Sigmoid colon (tissue), 7 donors: ENCODE measurements at regions of chr13 and their contacts with region 1.

Region 1: GRCh38 chr13:26498656-26499591 is 58.6 kb upstream of the WASF3 start:
- DNase-seq: peak; percentile 47
- H3K4me3 ChIP-seq: no peak overlapping the region
- H3K27ac ChIP-seq: no peak overlapping the region
- H3K4me1 ChIP-seq: peaks cover 0 to 27% (median 19%) of the 10 kb centered on the region in 4 donors
- H3K27me3 ChIP-seq: no peaks in the 10 kb centered on the region
- CTCF ChIP-seq: no peak
- EP300 ChIP-seq: no peak
- POLR2A ChIP-seq: no peak

Region 2: DNA sequence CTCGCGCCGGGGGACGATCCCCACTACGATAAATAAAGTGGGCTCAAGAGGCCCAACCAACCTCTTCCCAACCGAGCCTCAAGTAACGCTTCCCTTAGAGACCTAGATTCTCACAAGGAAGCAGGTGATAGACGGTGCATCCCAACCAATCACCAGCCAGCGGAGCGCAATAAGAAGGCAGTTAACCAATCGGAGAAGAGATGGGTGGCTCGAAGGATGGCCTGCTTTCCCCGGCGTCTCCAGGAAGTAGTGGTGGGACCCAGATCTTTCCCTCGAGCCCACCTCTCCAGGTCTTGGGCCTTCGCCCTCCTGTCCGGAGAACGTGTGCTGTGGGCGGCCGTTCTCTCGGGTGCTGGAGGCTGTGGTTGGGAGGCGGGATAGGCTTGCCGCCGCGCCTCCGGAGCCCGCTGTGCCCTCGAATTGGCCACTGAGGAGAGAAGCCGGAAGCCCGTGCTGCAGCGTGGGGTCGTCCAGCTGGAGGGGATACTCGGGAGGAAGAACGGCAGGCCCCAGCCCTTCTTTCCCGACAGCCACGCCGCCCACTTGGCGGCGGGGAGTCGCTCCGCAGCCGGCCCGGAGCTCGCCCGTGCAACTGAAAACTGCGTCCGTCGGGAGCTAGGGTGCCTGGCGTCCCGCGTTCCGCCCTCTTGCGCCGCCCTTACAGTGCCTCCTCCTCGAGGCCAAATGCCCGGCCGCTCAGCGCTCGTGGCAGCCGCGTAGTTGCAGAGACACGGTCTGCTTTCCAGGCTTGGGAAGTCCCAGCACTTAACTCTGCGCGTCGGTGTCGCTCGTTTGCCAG is 277.0 kb before region 1 on chr13 and contains the start of gene RNF6:
- intact Hi-C with region 1: loop called (anchors 2 kb)
- DNase-seq: peak; percentile 98
- H3K4me3 ChIP-seq: peak within 1 kb of the TSS; percentile 79 to 96 (median 92)
- H3K27ac ChIP-seq: peak within 1 kb of the TSS; percentile 95 to 98 (median 96)
- H3K4me1 ChIP-seq: peaks cover 0 to 26% (median 21%) of the 10 kb centered on the region in 4 donors
- H3K27me3 ChIP-seq: no peaks in the 10 kb centered on the region
- CTCF ChIP-seq: peak in 1 of 4 experiments; percentile 35
- EP300 ChIP-seq: no peak
- POLR2A ChIP-seq: peak in 1 of 2 donors; percentile 29
- total RNA-seq, gene RNF6: 11.9 to 27.1 (median 22.5) TPM

Region 3: DNA sequence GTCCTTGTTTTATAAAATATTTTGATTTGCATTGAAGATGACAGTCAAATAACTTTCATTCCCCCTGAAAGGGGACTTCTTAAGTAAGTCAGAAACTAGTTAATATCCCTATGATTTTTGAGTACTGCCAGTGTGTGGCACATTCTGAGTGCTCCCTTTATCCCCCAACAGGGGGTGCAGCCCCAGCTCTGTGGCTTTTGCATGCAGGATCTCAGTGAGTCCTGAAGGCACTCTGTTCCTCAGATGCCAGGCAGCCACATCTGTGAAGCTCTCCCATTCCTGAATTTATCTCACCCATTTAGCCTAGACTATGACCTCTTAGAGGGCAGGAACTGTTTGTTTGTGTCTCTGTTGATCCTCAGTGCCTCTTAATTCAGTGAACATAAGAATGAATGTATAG is 121.9 kb before region 1 on chr13:
- intact Hi-C with region 1: loop called (anchors 5 kb)
- DNase-seq: no peak
- H3K4me3 ChIP-seq: no peak overlapping the region
- H3K27ac ChIP-seq: no peak overlapping the region
- H3K4me1 ChIP-seq: peaks cover 0 to 23% (median 5%) of the 10 kb centered on the region in 4 donors
- H3K27me3 ChIP-seq: no peaks in the 10 kb centered on the region
- CTCF ChIP-seq: peak in 2 of 4 experiments; percentile 37 to 43
- EP300 ChIP-seq: no peak
- POLR2A ChIP-seq: no peak

Region 4: DNA sequence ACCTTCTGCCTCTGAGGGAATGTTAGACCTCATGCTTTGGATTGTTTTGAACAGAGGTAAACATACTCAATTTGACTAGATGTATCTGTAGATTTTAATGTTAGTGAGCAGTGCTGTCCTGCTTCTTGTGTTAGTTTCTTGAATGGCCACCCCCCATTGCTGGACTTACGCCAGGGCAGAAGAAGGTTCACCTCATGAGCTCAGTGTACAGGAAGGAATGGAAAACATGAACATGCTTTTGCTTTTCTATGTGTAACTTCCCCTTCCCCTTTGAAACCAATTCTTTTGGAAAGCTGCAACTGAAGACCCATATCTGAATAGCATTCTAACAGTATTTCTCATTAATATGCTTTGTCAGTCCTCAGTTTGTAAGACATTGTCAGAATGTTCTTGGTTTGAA is 90.8 kb after region 1 on chr13:
- intact Hi-C with region 1: no loop called
- DNase-seq: no peak
- H3K4me3 ChIP-seq: no peak overlapping the region
- H3K27ac ChIP-seq: no peak overlapping the region
- H3K4me1 ChIP-seq: peaks cover 0 to 14% (median 7%) of the 10 kb centered on the region in 4 donors
- H3K27me3 ChIP-seq: no peaks in the 10 kb centered on the region
- CTCF ChIP-seq: no peak
- EP300 ChIP-seq: no peak
- POLR2A ChIP-seq: no peak